Pancreas (tissue), 10 donors: ENCODE measurements at regions of chr17 and their contacts with region 1.

Region 1: GRCh38 chr17:40121181-40122135 is at the start of gene MSL1:
- DNase-seq: peak; percentile 84 to 96 (median 88)
- ATAC-seq: peak; percentile 79 to 91 (median 84)
- H3K4me3 ChIP-seq: peak within 1 kb of the TSS; percentile 79 to 100 (median 96)
- H3K27ac ChIP-seq: peak within 1 kb of the TSS; percentile 77 to 94 (median 86)
- H3K4me1 ChIP-seq: peaks cover 0 to 13% (median 6%) of the 10 kb centered on the region in 3 donors
- H3K27me3 ChIP-seq: no peaks in the 10 kb centered on the region
- CTCF ChIP-seq: no peak
- total RNA-seq, gene MSL1: 21.0 to 44.6 (median 29.2) TPM

Region 2: DNA sequence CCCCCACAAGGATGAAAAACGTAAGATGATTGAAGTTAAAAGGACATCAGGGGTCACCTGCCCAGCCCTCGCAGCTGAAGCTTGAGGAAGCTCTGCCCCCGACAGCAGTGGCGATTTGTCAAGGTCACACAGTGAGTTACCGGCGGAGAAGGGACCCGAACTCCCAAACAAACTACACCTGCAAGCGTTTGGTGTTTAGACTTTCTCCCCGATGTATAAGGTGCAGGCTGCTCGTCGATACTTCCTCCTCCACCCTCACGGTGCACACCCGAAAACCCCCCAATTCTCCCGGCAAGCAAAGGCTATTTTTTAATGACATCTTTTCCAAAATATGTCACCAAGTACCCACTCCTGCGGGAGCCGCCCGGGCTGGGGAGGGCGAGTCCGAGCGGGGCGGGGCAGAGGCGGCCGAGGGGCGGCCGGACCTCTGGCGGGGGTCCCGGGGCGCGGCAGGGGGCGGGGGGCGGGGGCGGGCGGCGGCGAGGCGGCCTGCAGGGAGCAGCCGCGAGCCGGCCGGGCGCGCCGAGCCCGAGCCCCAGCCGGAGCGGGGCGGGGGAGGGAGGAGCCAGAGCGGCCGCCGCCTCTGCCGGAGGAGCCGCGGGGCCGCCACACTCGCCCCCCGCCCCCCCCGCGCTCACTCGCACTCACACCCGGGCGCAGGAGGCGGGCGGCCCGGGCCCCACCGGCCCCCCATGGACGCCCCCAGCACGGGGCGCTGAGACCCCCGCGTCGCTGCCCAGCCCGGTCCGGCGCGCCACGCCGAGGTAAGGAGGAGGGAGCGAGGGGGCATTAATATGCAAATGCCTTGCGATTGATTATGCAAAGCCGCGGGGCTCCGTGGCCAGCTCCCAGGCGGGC is 58.9 kb before region 1 on chr17 and contains the start of gene THRA:
- intact Hi-C with region 1: loop called in 1 of 3 experiments (anchors 10 kb)
- DNase-seq: peak; percentile 63 to 88 (median 78)
- ATAC-seq: peak; percentile 77 to 87 (median 81)
- H3K4me3 ChIP-seq: peak within 1 kb of the TSS; percentile 47 to 99 (median 82)
- H3K27ac ChIP-seq: peak within 1 kb of the TSS; percentile 83 to 91 (median 86)
- H3K4me1 ChIP-seq: peaks cover 5 to 24% (median 23%) of the 10 kb centered on the region in 3 donors
- H3K27me3 ChIP-seq: no peaks in the 10 kb centered on the region
- CTCF ChIP-seq: no peak
- total RNA-seq, gene THRA: 13.8 to 28.1 (median 20.6) TPM